ENCODE measurements at regions of chr4 and their contacts with region 1.

Region 1: DNA sequence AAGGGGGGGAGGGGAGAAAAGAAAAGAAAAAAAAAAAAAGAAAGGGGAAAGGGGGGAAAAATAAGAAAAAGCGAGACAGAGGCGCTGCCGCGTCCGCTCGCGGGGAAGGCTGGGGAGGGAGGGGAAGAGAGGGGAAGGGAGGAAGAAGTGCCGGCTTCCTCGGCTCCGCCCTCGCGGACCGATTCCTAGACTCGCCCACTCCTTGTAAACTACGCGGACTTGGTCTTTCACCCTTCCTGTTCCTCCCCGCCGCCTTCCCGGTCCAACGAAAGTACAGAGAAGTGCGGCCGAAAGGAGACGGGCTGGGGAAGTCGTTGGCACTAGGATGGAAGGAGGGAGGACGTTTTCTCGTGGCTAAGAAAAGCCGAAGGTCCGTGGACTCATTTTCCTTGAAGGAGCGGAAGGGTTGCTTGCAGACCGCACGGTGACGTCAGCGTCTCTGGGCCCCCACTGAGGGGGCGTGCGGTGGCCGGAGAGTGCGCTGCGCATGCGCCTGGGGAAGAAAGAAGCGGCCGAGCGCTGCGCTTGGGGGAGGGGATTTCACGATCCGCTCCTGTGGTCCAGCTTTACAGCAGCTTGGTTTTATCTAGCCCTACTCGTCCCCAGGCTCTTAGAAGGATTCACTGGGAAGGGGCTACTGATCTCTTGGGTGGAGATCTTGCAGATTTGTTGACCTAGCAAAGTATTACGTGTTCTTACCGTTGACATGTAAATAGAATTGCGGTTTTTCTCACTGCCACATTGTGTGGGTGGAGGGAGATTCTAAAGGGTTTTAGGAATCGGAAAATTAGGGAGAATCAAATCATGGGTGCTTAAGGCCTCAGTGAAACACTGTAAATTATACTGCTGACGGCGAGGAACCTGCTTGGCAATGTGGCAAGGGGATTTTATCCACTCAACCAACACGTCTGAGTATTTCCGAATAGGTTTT is at the start of gene CCNI:
- DNase-seq: peak; percentile 95
- ATAC-seq: peak; percentile 77
- H3K4me3 Mint-ChIP-seq: no peak within 1 kb of the TSS
- H3K27ac Mint-ChIP-seq: peak within 1 kb of the TSS; percentile 99
- H3K4me1 Mint-ChIP-seq: peaks cover 45% of the 10 kb centered on the region
- H3K27me3 Mint-ChIP-seq: no peaks in the 10 kb centered on the region
- total RNA-seq, gene CCNI: 226 to 230 TPM

Region 2: GRCh38 chr4:75724066-75724866 is 1351.9 kb before region 1 on chr4 and contains the start of gene USO1:
- CTCF ChIA-PET with region 1: no interaction called
- POLR2A ChIA-PET with region 1: no interaction called
- intact Hi-C with region 1: loop called in 1 of 2 experiments (anchors 5 kb)
- DNase-seq: peak; percentile 99
- ATAC-seq: peak; percentile 94
- H3K4me3 Mint-ChIP-seq: peak within 1 kb of the TSS; percentile 99
- H3K27ac Mint-ChIP-seq: peak within 1 kb of the TSS; percentile 97
- H3K4me1 Mint-ChIP-seq: peaks cover 46% of the 10 kb centered on the region
- H3K27me3 Mint-ChIP-seq: no peaks in the 10 kb centered on the region
- total RNA-seq, gene USO1: 55.2 to 56.7 TPM

Region 3: GRCh38 chr4:76213415-76214176 is 862.5 kb before region 1 on chr4 and contains the start of gene SCARB2:
- CTCF ChIA-PET with region 1: no interaction called
- POLR2A ChIA-PET with region 1: no interaction called
- intact Hi-C with region 1: loop called in 1 of 2 experiments (anchors 5 kb)
- DNase-seq: peak; percentile 79
- ATAC-seq: peak; percentile 68
- H3K4me3 Mint-ChIP-seq: peak within 1 kb of the TSS; percentile 75
- H3K27ac Mint-ChIP-seq: peak within 1 kb of the TSS; percentile 78
- H3K4me1 Mint-ChIP-seq: peaks cover 32% of the 10 kb centered on the region
- H3K27me3 Mint-ChIP-seq: no peaks in the 10 kb centered on the region
- total RNA-seq, gene SCARB2: 3.3 to 4.6 TPM

Region 4: GRCh38 chr4:76993787-76994641 is 82.1 kb before region 1 on chr4:
- CTCF ChIA-PET with region 1: no interaction called
- POLR2A ChIA-PET with region 1: no interaction called
- intact Hi-C with region 1: loop called in 1 of 2 experiments (anchors 2 kb)
- DNase-seq: peak; percentile 70
- ATAC-seq: peak; percentile 80
- H3K4me3 Mint-ChIP-seq: peak overlapping the region; percentile 41
- H3K27ac Mint-ChIP-seq: peak overlapping the region; percentile 55
- H3K4me1 Mint-ChIP-seq: peaks cover 63% of the 10 kb centered on the region
- H3K27me3 Mint-ChIP-seq: peaks cover 7% of the 10 kb centered on the region

Region 5: DNA sequence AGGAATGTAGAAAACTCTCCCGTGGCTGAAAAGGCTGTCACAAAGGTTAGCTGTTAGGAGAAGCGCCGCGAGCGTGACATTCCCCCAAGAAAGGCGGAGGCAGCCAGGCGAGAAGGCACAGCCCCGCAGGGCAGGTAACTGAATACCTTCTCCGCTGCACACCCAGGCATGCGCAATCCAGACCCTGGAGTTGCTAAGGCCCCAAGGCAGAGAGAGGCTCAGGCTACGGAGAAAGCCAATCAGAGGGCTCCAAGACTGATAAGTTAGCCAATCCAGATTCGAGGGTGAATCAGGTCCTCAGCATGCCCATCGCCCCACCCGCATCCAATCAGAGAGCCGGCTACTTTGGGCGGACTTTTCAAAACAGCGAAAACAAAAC is 80.4 kb after region 1 on chr4:
- CTCF ChIA-PET with region 1: interaction called, 6 read pairs
- POLR2A ChIA-PET with region 1: no interaction called
- intact Hi-C with region 1: loop called (anchors 1 kb)
- DNase-seq: peak; percentile 95
- ATAC-seq: peak; percentile 98
- H3K4me3 Mint-ChIP-seq: peak overlapping the region; percentile 97
- H3K27ac Mint-ChIP-seq: peak overlapping the region; percentile 97
- H3K4me1 Mint-ChIP-seq: peaks cover 31% of the 10 kb centered on the region
- H3K27me3 Mint-ChIP-seq: no peaks in the 10 kb centered on the region

Region 6: GRCh38 chr4:77586951-77587383 is 510.8 kb after region 1 on chr4:
- CTCF ChIA-PET with region 1: no interaction called
- POLR2A ChIA-PET with region 1: no interaction called
- intact Hi-C with region 1: loop called in 1 of 2 experiments (anchors 5 kb)
- DNase-seq: peak; percentile 87
- ATAC-seq: peak; percentile 94
- H3K4me3 Mint-ChIP-seq: peak overlapping the region; percentile 54
- H3K27ac Mint-ChIP-seq: peak overlapping the region; percentile 84
- H3K4me1 Mint-ChIP-seq: peaks cover 66% of the 10 kb centered on the region
- H3K27me3 Mint-ChIP-seq: peaks cover 16% of the 10 kb centered on the region

Region 7: GRCh38 chr4:77765720-77766119 is 689.6 kb after region 1 on chr4:
- CTCF ChIA-PET with region 1: no interaction called
- POLR2A ChIA-PET with region 1: no interaction called
- intact Hi-C with region 1: no loop called
- DNase-seq: no peak
- ATAC-seq: no peak
- H3K4me3 Mint-ChIP-seq: no peak overlapping the region
- H3K27ac Mint-ChIP-seq: no peak overlapping the region
- H3K4me1 Mint-ChIP-seq: peaks cover 16% of the 10 kb centered on the region
- H3K27me3 Mint-ChIP-seq: no peaks in the 10 kb centered on the region

Measured in activated CD4-positive, alpha-beta T cell treated with anti-CD3 and anti-CD28 coated beads for 36 hours (primary cell).